Activated naive CD8-positive, alpha-beta T cell treated with anti-CD3 and anti-CD28 coated beads, Interleukin-2, amount 10 ng/mL, durations not matched to agents 7 days and 5 days (primary cell): ENCODE measurements at regions of chr6 and their contacts with region 1.

Region 1: GRCh38 chr6:109482905-109483735 is at the start of gene ZBTB24:
- DNase-seq: peak; percentile 94
- ATAC-seq: peak; percentile 84
- H3K4me3 Mint-ChIP-seq: peak within 1 kb of the TSS; percentile 93
- H3K27ac Mint-ChIP-seq: peak within 1 kb of the TSS; percentile 89
- H3K4me1 Mint-ChIP-seq: peaks cover 40% of the 10 kb centered on the region
- H3K27me3 Mint-ChIP-seq: peaks cover 8% of the 10 kb centered on the region
- total RNA-seq, gene ZBTB24: 19.7 to 20.0 TPM

Region 2: GRCh38 chr6:109440331-109441068 is 42.6 kb before region 1 on chr6 and contains the starts of genes PPIL6 and SMPD2:
- POLR2A ChIA-PET with region 1: interaction called, 12 read pairs
- DNase-seq: peak; percentile 88
- ATAC-seq: peak; percentile 85
- H3K4me3 Mint-ChIP-seq: peak within 1 kb of the TSS; percentile 93
- H3K27ac Mint-ChIP-seq: peak within 1 kb of the TSS; percentile 80
- H3K4me1 Mint-ChIP-seq: peaks cover 16% of the 10 kb centered on the region
- H3K27me3 Mint-ChIP-seq: no peaks in the 10 kb centered on the region
- total RNA-seq, gene PPIL6: 0.17 to 0.53 TPM
- total RNA-seq, gene SMPD2: 15.6 to 16.6 TPM